ENCODE measurements at regions of chr7 and their contacts with region 1.

Region 1: GRCh38 chr7:135274495-135275268 is 41.0 kb downstream of the STRA8 start:
- DNase-seq: peak; percentile 80
- ATAC-seq: peak; percentile 81
- H3K4me3 Mint-ChIP-seq: no peak overlapping the region
- H3K27ac Mint-ChIP-seq: no peak overlapping the region
- H3K4me1 Mint-ChIP-seq: no peaks in the 10 kb centered on the region
- H3K27me3 Mint-ChIP-seq: peaks cover 12% of the 10 kb centered on the region

Region 2: GRCh38 chr7:134865001-134865845 is 409.5 kb before region 1 on chr7:
- CTCF ChIA-PET with region 1: no interaction called
- DNase-seq: peak; percentile 57
- ATAC-seq: peak; percentile 86
- H3K4me3 Mint-ChIP-seq: peak overlapping the region; percentile 49
- H3K27ac Mint-ChIP-seq: peak overlapping the region; percentile 52
- H3K4me1 Mint-ChIP-seq: peaks cover 15% of the 10 kb centered on the region
- H3K27me3 Mint-ChIP-seq: peaks cover 2% of the 10 kb centered on the region

Region 3: DNA sequence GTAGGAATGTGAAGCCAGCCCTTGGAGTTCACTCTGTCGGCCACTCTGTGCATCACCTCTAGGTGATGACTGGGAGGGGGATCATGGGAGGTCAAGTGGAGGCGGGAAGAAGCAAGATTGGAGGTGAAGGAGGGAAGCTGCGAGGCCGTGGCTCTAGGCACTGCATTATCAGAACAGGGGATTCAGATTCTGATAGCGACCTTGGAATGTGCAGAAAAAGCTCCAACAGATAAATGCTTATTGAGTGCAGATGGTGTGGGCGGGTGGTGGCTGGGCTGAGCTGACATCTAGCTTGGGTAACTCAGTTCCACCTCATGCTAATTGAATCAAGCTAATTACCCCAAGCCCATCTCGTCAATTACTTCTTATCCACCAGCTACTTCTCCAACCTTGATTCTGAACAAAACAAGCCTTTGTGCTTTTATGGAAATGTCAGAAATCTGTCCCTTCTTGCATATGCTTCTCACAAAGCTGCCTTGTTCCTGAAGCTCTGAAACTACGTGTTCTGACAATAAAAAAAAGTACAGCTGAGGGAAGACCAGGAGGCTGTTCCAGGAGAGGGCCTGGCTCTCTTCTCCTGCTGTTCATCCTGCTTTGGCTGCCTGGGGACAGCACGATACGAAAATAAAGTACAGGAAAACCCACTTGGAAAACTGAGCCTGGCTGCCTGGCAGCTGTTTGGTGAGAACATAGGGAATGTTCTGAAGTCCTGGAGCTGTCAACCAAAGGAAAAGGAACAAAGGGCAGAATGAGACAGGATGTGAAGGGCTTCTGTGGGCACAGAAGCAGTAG is 13.6 kb before region 1 on chr7:
- CTCF ChIA-PET with region 1: interaction called, 14 read pairs
- DNase-seq: no peak
- ATAC-seq: no peak
- H3K4me3 Mint-ChIP-seq: no peak overlapping the region
- H3K27ac Mint-ChIP-seq: no peak overlapping the region
- H3K4me1 Mint-ChIP-seq: no peaks in the 10 kb centered on the region
- H3K27me3 Mint-ChIP-seq: peaks cover 3% of the 10 kb centered on the region

Region 4: GRCh38 chr7:135313971-135314370 is 39.3 kb after region 1 on chr7:
- CTCF ChIA-PET with region 1: no interaction called
- DNase-seq: no peak
- ATAC-seq: no peak
- H3K4me3 Mint-ChIP-seq: no peak overlapping the region
- H3K27ac Mint-ChIP-seq: no peak overlapping the region
- H3K4me1 Mint-ChIP-seq: no peaks in the 10 kb centered on the region
- H3K27me3 Mint-ChIP-seq: peaks cover 2% of the 10 kb centered on the region

Region 5: GRCh38 chr7:135335628-135336139 is 61.0 kb after region 1 on chr7:
- CTCF ChIA-PET with region 1: interaction called, 22 read pairs
- DNase-seq: peak; percentile 49
- ATAC-seq: peak; percentile 42
- H3K4me3 Mint-ChIP-seq: no peak overlapping the region
- H3K27ac Mint-ChIP-seq: no peak overlapping the region
- H3K4me1 Mint-ChIP-seq: no peaks in the 10 kb centered on the region
- H3K27me3 Mint-ChIP-seq: no peaks in the 10 kb centered on the region

Measured in activated CD8-positive, alpha-beta memory T cell treated with anti-CD3 and anti-CD28 coated beads, Interleukin-2, amount 10 ng/mL, durations not matched to agents 7 days and 5 days (primary cell).